CD4-positive, alpha-beta T cell (primary cell): ENCODE measurements at regions of chr12 and their contacts with region 1.

Region 1: GRCh38 chr12:12008931-12009611 is 61.7 kb upstream of the BCL2L14 start:
- DNase-seq: peak in 13 of 14 experiments; percentile 39 to 81 (median 45)
- ATAC-seq: peak; percentile 65
- H3K4me3 ChIP-seq: no peak overlapping the region
- H3K4me3 Mint-ChIP-seq: peak overlapping the region; percentile 78
- H3K27ac ChIP-seq: peak overlapping the region; percentile 74 to 76
- H3K27ac Mint-ChIP-seq: peak overlapping the region; percentile 96
- H3K4me1 ChIP-seq: peaks cover 63% of the 10 kb centered on the region
- H3K4me1 Mint-ChIP-seq: peaks cover 80% of the 10 kb centered on the region
- H3K27me3 ChIP-seq: no peaks in the 10 kb centered on the region
- H3K27me3 Mint-ChIP-seq: no peaks in the 10 kb centered on the region
- CTCF ChIP-seq: peak; percentile 24

Region 2: DNA sequence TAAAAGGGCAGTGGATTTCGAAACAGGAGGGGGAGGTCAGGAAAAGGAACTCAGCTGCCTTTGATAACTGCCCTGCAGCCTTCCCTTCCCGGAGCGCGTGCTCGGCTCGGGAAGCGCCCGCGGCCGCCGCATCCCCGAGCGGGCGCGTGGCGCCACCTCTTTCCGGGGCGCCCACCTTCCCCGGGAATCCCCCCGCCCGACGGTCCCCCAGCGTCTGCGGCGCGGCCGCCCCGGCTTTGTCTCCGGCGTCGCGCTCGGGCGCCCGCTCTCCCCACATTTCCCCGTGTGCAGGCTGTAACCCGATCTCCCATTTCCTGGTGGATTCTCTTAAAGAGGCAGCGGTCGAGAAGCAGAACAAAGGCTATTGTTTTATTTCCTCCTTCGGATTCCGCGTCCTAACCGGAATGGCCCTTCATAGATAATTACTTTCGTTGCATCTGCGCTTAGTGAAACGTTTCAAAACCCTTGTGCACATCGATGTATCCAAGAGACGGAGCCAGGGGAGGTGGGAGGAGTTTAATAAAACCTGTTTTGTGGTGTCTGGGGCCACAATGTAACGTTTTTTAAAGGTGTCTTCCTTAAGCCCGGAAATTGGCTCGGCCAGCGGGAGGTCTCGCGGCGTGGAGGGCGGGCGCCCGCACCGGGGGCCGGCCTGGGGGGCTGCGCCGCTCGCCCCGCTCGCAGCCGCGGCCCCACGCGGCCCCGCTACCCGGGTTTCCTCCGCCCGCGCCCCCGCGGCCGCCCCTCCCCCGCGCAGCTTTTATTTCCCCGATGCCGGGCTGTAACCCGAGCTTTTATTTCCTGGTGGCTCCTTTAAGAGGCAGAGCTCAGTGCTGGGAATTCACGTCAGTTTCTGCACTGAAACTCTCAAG is 360.0 kb before region 1 on chr12 and contains the start of gene ETV6:
- CTCF ChIA-PET with region 1: no interaction called
- POLR2A ChIA-PET with region 1: interaction called, 14 read pairs
- intact Hi-C with region 1: loop called in 1 of 2 experiments (anchors 5 kb)
- DNase-seq: peak; percentile 41 to 88 (median 62)
- ATAC-seq: peak; percentile 62
- H3K4me3 ChIP-seq: peak within 1 kb of the TSS; percentile 97
- H3K4me3 Mint-ChIP-seq: peak within 1 kb of the TSS; percentile 98
- H3K27ac ChIP-seq: peak within 1 kb of the TSS; percentile 68 to 81
- H3K27ac Mint-ChIP-seq: peak within 1 kb of the TSS; percentile 92
- H3K4me1 ChIP-seq: peaks cover 26% of the 10 kb centered on the region
- H3K4me1 Mint-ChIP-seq: peaks cover 38% of the 10 kb centered on the region
- H3K27me3 ChIP-seq: no peaks in the 10 kb centered on the region
- H3K27me3 Mint-ChIP-seq: no peaks in the 10 kb centered on the region
- CTCF ChIP-seq: no peak
- total RNA-seq, gene ETV6: 28.5 to 30.2 TPM

Region 3: DNA sequence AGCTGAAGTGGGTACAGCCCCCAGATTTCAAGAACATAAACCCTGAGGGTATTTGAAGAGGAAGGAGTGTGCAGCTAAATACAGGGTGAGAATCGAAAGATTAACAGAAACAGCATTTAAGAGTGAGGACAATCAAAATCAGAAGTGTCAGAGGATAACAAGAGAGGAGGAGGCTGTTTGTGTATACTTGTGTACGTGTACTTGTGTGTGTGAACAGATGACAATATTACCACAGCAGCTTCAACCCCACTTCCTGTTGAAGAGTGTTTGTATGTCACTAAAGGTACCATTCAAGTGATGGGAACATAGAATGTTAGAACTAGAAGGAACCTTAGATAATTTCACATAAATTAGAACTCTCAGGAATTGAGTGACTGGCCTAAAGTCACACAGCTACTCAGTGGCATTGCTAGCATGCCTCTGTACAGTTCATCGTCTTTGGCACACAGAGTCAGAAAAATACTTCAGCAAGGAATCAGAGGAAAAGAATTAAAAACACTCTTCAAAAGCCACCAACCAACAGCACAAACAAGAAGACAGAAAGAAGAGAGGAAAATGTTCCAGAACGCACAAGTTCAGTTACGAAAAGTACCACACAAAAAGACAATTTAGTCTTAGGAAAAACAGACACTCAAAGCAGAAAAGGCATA is 102.7 kb before region 1 on chr12:
- CTCF ChIA-PET with region 1: no interaction called
- POLR2A ChIA-PET with region 1: interaction called, 3 read pairs
- intact Hi-C with region 1: loop called in 1 of 2 experiments (anchors 10 kb)
- DNase-seq: peak in 1 of 14 experiments; percentile 19
- ATAC-seq: peak; percentile 57
- H3K4me3 ChIP-seq: no peak overlapping the region
- H3K4me3 Mint-ChIP-seq: no peak overlapping the region
- H3K27ac ChIP-seq: no peak overlapping the region
- H3K27ac Mint-ChIP-seq: peak overlapping the region; percentile 0
- H3K4me1 ChIP-seq: peaks cover 21% of the 10 kb centered on the region
- H3K4me1 Mint-ChIP-seq: peaks cover 48% of the 10 kb centered on the region
- H3K27me3 ChIP-seq: no peaks in the 10 kb centered on the region
- H3K27me3 Mint-ChIP-seq: no peaks in the 10 kb centered on the region
- CTCF ChIP-seq: no peak

Region 4: DNA sequence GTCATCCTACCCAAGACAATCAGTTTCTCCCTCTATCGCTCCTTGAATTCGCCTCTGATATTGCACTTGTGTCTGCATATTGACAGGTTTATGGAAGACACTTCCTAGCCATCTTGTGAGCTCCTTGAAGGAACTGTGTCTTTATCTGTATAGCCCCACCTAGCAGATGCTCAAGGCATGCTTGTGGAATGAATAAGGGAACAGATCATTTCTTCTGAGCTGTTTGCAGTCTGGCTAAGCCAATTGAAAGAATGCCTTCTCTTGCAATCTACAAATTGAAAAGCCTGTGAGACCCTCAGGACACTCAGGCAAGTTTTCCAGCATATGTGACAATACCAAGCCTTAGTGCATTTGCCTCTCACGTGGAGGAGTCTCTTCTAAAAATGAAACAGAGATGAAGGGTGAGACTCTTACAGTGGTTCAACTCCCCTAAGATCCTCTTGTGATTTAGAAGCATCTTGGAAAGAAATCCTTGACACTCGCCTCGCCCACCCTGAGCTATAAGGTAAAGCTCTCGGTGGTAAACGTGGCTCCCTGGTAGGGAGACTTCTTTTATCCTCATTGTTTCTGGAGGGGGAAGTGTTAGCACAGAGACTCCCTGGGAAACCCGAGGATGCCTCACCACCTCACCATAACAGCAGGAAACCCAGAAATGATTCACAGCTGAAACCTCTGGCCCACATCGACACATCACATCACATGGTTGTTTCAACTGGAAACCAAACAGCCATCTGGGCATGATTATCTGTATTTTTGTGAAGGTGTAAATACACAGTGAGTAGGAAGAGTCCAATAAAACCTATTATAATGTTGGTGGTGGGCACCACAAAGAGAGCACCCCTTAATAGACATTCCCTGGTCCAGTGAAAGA is 50.6 kb before region 1 on chr12:
- CTCF ChIA-PET with region 1: no interaction called
- POLR2A ChIA-PET with region 1: no interaction called
- intact Hi-C with region 1: loop called in 1 of 2 experiments (anchors 10 kb)
- DNase-seq: peak in 6 of 14 experiments; percentile 9 to 58 (median 34)
- ATAC-seq: peak; percentile 32
- H3K4me3 ChIP-seq: no peak overlapping the region
- H3K4me3 Mint-ChIP-seq: no peak overlapping the region
- H3K27ac ChIP-seq: no peak overlapping the region
- H3K27ac Mint-ChIP-seq: no peak overlapping the region
- H3K4me1 ChIP-seq: peaks cover 18% of the 10 kb centered on the region
- H3K4me1 Mint-ChIP-seq: peaks cover 17% of the 10 kb centered on the region
- H3K27me3 ChIP-seq: no peaks in the 10 kb centered on the region
- H3K27me3 Mint-ChIP-seq: no peaks in the 10 kb centered on the region
- CTCF ChIP-seq: no peak

Region 5: GRCh38 chr12:11981121-11981733 is 27.8 kb before region 1 on chr12:
- CTCF ChIA-PET with region 1: interaction called, 29 read pairs
- POLR2A ChIA-PET with region 1: interaction called, 35 read pairs
- intact Hi-C with region 1: loop called in 1 of 2 experiments (anchors 1 kb)
- DNase-seq: peak in 13 of 14 experiments; percentile 9 to 93 (median 19)
- ATAC-seq: peak; percentile 84
- H3K4me3 ChIP-seq: peak overlapping the region; percentile 8
- H3K4me3 Mint-ChIP-seq: peak overlapping the region; percentile 1
- H3K27ac ChIP-seq: peak overlapping the region; percentile 54 to 77
- H3K27ac Mint-ChIP-seq: peak overlapping the region; percentile 67
- H3K4me1 ChIP-seq: peaks cover 32% of the 10 kb centered on the region
- H3K4me1 Mint-ChIP-seq: peaks cover 47% of the 10 kb centered on the region
- H3K27me3 ChIP-seq: no peaks in the 10 kb centered on the region
- H3K27me3 Mint-ChIP-seq: no peaks in the 10 kb centered on the region
- CTCF ChIP-seq: no peak

Region 6: DNA sequence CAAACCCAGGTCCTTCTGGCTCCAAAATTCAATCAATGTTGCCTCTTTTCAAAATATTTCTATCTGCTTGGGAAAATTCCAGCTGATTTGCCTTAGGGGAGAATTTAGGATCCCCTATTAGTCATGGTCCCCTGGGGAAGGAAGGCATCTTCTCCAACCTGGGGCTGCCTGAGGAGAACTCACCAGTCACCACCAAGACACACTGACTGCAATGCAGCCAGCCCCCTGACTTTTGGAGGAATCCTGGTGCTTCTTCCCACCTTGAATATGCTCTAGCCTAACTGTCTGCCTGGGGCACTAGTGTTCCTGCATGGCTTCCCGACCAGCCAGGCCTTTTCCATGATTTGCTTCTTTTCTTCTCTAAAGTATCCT is 10.1 kb before region 1 on chr12:
- CTCF ChIA-PET with region 1: interaction called, 9 read pairs
- POLR2A ChIA-PET with region 1: interaction called, 38 read pairs
- intact Hi-C with region 1: loop called in 1 of 2 experiments (anchors 1 kb)
- DNase-seq: peak in 1 of 14 experiments; percentile 25
- ATAC-seq: peak; percentile 4
- H3K4me3 ChIP-seq: no peak overlapping the region
- H3K4me3 Mint-ChIP-seq: peak overlapping the region; percentile 59
- H3K27ac ChIP-seq: peak overlapping the region; percentile 28 to 40
- H3K27ac Mint-ChIP-seq: peak overlapping the region; percentile 97
- H3K4me1 ChIP-seq: peaks cover 29% of the 10 kb centered on the region
- H3K4me1 Mint-ChIP-seq: peaks cover 52% of the 10 kb centered on the region
- H3K27me3 ChIP-seq: no peaks in the 10 kb centered on the region
- H3K27me3 Mint-ChIP-seq: no peaks in the 10 kb centered on the region
- CTCF ChIP-seq: no peak

Region 7: DNA sequence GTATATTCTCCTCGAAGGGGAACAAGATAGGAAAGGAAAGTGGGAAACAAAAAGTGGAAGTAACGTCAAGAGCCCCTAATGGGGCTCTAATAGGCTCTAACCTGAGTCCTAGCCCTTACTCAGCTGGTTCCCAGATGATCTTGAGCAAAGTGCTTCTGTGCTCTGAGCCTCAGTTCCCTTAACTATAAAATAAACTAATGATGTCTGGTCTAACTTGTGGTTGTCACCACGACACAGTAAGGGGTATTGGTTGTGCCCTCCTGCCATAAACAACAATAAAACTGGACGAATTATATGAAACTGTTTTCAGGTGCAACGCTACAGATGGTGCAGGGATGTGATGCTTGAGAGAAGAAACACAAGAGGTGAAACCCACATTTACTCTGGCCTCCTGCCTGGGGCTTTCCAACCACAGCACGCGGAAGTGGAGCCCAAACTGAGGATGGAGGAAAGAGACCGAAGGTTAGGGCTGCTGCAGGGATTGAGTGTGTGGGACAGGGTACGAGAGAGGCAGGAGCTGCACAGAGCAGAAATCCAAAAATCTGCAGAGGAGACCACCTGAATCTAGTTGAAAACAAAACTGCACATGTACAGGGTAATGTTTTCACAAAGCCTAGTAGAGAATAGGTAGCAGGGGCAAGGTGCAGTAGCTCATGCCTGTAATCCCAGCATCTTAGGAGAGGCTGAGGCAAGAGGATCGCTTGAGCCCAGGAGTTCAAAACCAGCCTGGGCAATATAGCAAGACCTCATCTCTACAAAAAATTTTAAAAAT is 16.0 kb after region 1 on chr12:
- CTCF ChIA-PET with region 1: interaction called, 3 read pairs
- POLR2A ChIA-PET with region 1: interaction called, 13 read pairs
- intact Hi-C with region 1: loop called in 1 of 2 experiments (anchors 2 kb)
- DNase-seq: peak in 9 of 14 experiments; percentile 25 to 76 (median 42)
- ATAC-seq: peak; percentile 91
- H3K4me3 ChIP-seq: no peak overlapping the region
- H3K4me3 Mint-ChIP-seq: no peak overlapping the region
- H3K27ac ChIP-seq: peak overlapping the region in 1 of 2 donors; percentile 47
- H3K27ac Mint-ChIP-seq: peak overlapping the region; percentile 68
- H3K4me1 ChIP-seq: peaks cover 25% of the 10 kb centered on the region
- H3K4me1 Mint-ChIP-seq: peaks cover 35% of the 10 kb centered on the region
- H3K27me3 ChIP-seq: no peaks in the 10 kb centered on the region
- H3K27me3 Mint-ChIP-seq: no peaks in the 10 kb centered on the region
- CTCF ChIP-seq: no peak